ENCODE measurements at regions of chr16 and their contacts with region 1.

Region 1: DNA sequence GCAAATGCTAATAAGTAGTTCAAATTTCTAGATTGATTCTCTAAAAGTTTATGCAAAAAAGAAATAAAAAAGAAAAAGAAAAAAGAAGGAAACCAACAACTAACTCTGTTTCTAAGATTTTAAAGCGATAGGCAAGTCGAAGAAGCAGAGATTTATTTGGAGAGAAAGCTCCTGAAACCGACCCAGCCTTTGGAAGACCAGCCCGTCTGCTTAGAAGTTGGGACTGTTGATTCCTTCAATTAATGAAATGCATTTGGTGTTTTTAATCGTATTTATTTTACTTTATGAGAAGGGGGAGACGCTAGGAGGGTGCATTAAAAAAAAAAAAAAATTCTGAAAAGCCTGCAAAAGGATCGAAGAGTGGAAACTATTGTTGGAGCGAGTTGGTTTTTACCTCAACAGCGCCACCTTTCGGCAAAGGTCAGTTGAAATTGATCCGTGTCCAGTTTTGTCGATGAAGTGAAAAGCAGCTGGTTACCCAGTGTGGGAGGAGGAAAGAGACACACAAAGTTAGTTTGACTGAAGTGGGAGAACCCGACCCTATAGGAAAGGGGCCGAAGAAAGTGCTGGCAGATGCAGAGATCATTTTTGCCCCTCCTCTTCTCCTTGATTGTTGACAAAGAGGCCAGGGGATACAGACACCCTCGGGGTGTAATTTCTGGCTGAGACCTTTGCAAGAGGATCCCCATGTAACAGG is 1.5 kb upstream of the MAF start:
- DNase-seq: peak; percentile 92
- ATAC-seq: peak; percentile 14
- H3K4me3 Mint-ChIP-seq: peak overlapping the region; percentile 84
- H3K27ac Mint-ChIP-seq: peak overlapping the region; percentile 92
- H3K4me1 Mint-ChIP-seq: peaks cover 32% of the 10 kb centered on the region
- H3K27me3 Mint-ChIP-seq: peaks cover 24% of the 10 kb centered on the region

Region 2: GRCh38 chr16:78742501-78743283 is 859.4 kb before region 1 on chr16:
- CTCF ChIA-PET with region 1: no interaction called
- POLR2A ChIA-PET with region 1: no interaction called
- intact Hi-C with region 1: loop called in 1 of 2 experiments (anchors 1 kb)
- DNase-seq: peak; percentile 89
- ATAC-seq: peak; percentile 95
- H3K4me3 Mint-ChIP-seq: peak overlapping the region; percentile 61
- H3K27ac Mint-ChIP-seq: peak overlapping the region; percentile 96
- H3K4me1 Mint-ChIP-seq: peaks cover 22% of the 10 kb centered on the region
- H3K27me3 Mint-ChIP-seq: no peaks in the 10 kb centered on the region

Region 3: GRCh38 chr16:78900044-78900811 is 701.9 kb before region 1 on chr16:
- CTCF ChIA-PET with region 1: interaction called, 6 read pairs
- POLR2A ChIA-PET with region 1: no interaction called
- intact Hi-C with region 1: loop called (anchors 1 to 2 kb)
- DNase-seq: no peak
- ATAC-seq: peak; percentile 55
- H3K4me3 Mint-ChIP-seq: no peak overlapping the region
- H3K27ac Mint-ChIP-seq: peak overlapping the region; percentile 80
- H3K4me1 Mint-ChIP-seq: peaks cover 52% of the 10 kb centered on the region
- H3K27me3 Mint-ChIP-seq: no peaks in the 10 kb centered on the region

Region 4: DNA sequence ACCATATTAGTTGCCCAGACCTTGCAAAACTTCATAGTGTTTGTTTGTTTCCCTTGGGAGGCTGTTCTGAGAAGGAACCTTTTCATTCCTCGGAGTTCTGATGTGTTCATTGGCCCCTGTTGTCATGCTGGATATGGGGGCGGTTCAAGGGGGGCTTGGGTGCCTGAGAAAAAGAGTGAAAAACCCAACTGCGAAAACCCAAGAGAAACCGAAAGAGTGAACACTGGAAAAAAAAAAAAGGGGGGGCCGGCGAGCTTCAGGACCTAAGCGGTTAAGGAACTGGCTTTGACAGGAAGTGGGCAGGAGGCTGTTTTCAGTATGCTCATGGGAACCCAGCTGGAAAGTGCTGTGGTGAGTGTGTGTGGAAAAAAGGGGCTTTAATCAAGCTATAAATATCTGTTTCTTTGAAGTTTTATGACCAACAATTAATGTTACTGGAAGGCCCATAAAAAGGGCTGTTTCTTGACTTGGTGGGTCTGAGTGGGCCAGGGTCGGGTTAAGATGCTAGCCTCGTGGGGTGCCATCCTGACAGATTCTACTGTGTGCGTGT is 512.3 kb before region 1 on chr16:
- CTCF ChIA-PET with region 1: no interaction called
- POLR2A ChIA-PET with region 1: no interaction called
- intact Hi-C with region 1: loop called (anchors 5 kb)
- DNase-seq: peak; percentile 82
- ATAC-seq: peak; percentile 70
- H3K4me3 Mint-ChIP-seq: peak overlapping the region; percentile 66
- H3K27ac Mint-ChIP-seq: peak overlapping the region; percentile 95
- H3K4me1 Mint-ChIP-seq: peaks cover 57% of the 10 kb centered on the region
- H3K27me3 Mint-ChIP-seq: no peaks in the 10 kb centered on the region

Region 5: GRCh38 chr16:79328402-79329165 is 273.5 kb before region 1 on chr16:
- CTCF ChIA-PET with region 1: no interaction called
- POLR2A ChIA-PET with region 1: interaction called, 11 read pairs
- intact Hi-C with region 1: no loop called
- DNase-seq: no peak
- ATAC-seq: no peak
- H3K4me3 Mint-ChIP-seq: no peak overlapping the region
- H3K27ac Mint-ChIP-seq: no peak overlapping the region
- H3K4me1 Mint-ChIP-seq: peaks cover 16% of the 10 kb centered on the region
- H3K27me3 Mint-ChIP-seq: peaks cover 16% of the 10 kb centered on the region

Region 6: GRCh38 chr16:79409978-79410377 is 192.1 kb before region 1 on chr16:
- CTCF ChIA-PET with region 1: no interaction called
- POLR2A ChIA-PET with region 1: no interaction called
- intact Hi-C with region 1: no loop called
- DNase-seq: no peak
- ATAC-seq: no peak
- H3K4me3 Mint-ChIP-seq: no peak overlapping the region
- H3K27ac Mint-ChIP-seq: no peak overlapping the region
- H3K4me1 Mint-ChIP-seq: peaks cover 9% of the 10 kb centered on the region
- H3K27me3 Mint-ChIP-seq: peaks cover 2% of the 10 kb centered on the region

Region 7: DNA sequence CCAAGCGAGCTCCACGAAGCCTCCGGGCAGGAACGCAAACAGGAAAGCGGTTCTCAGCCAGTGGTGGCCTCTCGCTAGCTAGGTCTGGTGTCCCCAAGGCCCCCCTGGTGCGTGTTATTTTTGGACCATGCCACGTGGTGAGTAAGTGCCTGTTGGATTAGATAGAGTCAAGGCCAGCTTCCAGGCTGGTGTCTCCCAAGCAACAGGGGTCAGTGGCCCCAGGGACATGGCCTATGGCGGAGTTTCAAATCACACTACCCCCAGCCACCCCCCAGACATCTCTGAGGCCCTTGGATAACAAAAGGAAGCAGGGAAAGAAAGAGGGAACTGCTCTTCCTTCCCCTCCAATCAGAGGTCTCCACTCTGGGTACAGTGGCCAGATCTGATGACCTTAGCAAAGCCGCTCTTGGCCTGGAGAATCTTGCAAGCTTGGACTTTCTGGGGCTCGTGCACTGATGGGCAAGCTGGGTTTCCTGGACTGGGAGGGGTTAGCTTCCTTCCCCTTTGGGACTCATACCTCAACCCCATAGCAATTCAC is 59.8 kb before region 1 on chr16:
- CTCF ChIA-PET with region 1: no interaction called
- POLR2A ChIA-PET with region 1: no interaction called
- intact Hi-C with region 1: no loop called
- DNase-seq: no peak
- ATAC-seq: no peak
- H3K4me3 Mint-ChIP-seq: no peak overlapping the region
- H3K27ac Mint-ChIP-seq: no peak overlapping the region
- H3K4me1 Mint-ChIP-seq: no peaks in the 10 kb centered on the region
- H3K27me3 Mint-ChIP-seq: peaks cover 4% of the 10 kb centered on the region

Region 8: GRCh38 chr16:79751471-79752184 is 149.5 kb after region 1 on chr16:
- CTCF ChIA-PET with region 1: no interaction called
- POLR2A ChIA-PET with region 1: no interaction called
- intact Hi-C with region 1: no loop called
- DNase-seq: no peak
- ATAC-seq: no peak
- H3K4me3 Mint-ChIP-seq: no peak overlapping the region
- H3K27ac Mint-ChIP-seq: no peak overlapping the region
- H3K4me1 Mint-ChIP-seq: peaks cover 24% of the 10 kb centered on the region
- H3K27me3 Mint-ChIP-seq: peaks cover 6% of the 10 kb centered on the region

Region 9: GRCh38 chr16:79845033-79845733 is 243.1 kb after region 1 on chr16:
- CTCF ChIA-PET with region 1: no interaction called
- POLR2A ChIA-PET with region 1: no interaction called
- intact Hi-C with region 1: loop called (anchors 1 to 10 kb)
- DNase-seq: peak; percentile 47
- ATAC-seq: peak; percentile 45
- H3K4me3 Mint-ChIP-seq: no peak overlapping the region
- H3K27ac Mint-ChIP-seq: peak overlapping the region; percentile 74
- H3K4me1 Mint-ChIP-seq: peaks cover 32% of the 10 kb centered on the region
- H3K27me3 Mint-ChIP-seq: peaks cover 10% of the 10 kb centered on the region

Region 10: DNA sequence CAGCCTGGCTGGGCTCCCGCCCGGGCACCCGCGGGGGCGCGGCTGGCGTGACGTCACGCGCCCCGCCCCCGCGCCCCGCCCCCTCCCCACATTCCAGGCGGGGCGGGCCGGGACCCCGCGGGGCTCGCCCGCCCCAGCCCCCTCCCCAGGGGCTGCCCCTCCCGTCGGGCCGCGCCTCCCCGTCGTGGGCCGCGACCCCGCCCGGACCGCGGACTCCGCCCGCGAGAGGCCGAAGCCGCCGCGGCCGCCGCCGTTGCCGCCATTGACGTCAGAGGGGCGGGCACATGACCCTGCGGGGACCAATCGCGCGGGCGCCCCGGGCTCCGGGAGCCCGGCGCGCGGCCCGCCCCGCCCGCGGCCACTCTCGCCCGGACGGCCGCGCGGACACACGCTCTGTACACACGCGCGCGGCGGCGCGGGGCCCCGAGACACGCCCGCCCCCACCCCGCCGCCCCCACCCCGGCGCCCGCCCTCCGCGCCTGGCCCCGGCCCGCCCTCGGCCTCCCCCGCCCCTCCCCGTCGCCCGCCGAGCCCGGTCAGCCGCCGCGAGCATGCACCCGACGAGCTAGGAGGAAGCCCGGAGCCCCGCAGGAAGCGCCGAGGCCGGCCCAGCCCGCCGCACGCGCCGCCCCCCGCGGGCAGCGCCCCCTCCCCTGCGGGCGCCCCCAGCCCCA is 1842.5 kb after region 1 on chr16 and contains the start of gene CMIP:
- CTCF ChIA-PET with region 1: no interaction called
- POLR2A ChIA-PET with region 1: no interaction called
- intact Hi-C with region 1: loop called in 1 of 2 experiments (anchors 5 kb)
- DNase-seq: peak; percentile 89
- ATAC-seq: peak; percentile 73
- H3K4me3 Mint-ChIP-seq: peak within 1 kb of the TSS; percentile 96
- H3K27ac Mint-ChIP-seq: peak within 1 kb of the TSS; percentile 93
- H3K4me1 Mint-ChIP-seq: peaks cover 34% of the 10 kb centered on the region
- H3K27me3 Mint-ChIP-seq: no peaks in the 10 kb centered on the region
- total RNA-seq, gene CMIP: 39.1 to 40.3 TPM